IMR-90 (cell line): ENCODE measurements at regions of chr18 and their contacts with region 1.

Region 1: DNA sequence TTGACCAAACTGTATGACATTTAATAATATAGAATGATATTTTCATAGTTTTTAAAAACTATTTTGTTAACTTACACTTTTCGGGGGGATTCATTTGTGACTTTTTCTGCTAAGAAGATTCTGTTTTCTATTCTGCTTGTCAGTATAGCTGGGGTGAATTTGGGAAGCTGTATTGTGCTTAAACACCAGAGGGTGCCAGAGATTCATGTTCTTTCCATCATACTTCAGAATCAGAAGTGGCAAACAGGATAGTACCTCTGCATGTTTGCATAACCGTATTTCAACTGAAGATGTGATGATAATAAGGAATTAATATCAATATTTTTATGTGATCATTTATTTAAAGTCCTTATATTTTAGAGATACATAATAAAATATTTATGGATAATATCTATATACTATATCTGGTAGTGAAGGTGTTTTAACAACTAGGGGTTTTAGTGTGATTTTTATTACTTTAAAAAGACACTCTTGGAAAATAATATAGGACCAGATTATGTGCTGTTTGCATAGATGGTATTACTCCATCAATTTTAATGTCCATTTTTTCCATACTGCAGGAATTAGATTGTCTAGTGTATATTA is 81.0 kb downstream of the TAF4B start:
- DNase-seq: peak; percentile 63
- ATAC-seq: peak; percentile 90
- H3K4me3 ChIP-seq: no peak overlapping the region
- H3K27ac ChIP-seq: no peak overlapping the region
- H3K4me1 ChIP-seq: no peaks in the 10 kb centered on the region
- H3K27me3 ChIP-seq: no peaks in the 10 kb centered on the region
- CTCF ChIP-seq: peak; percentile 79
- POLR2A ChIP-seq: no peak
- RAD21 ChIP-seq: peak; percentile 79

Region 2: GRCh38 chr18:26648509-26649192 is 341.4 kb after region 1 on chr18:
- CTCF ChIA-PET with region 1: no interaction called
- POLR2A ChIA-PET with region 1: no interaction called
- dilution Hi-C with region 1: no loop called
- in situ Hi-C with region 1: no loop called
- intact Hi-C with region 1: loop called (anchors 1 kb)
- DNase-seq: no peak
- ATAC-seq: no peak
- H3K4me3 ChIP-seq: no peak overlapping the region
- H3K27ac ChIP-seq: no peak overlapping the region
- H3K4me1 ChIP-seq: no peaks in the 10 kb centered on the region
- H3K27me3 ChIP-seq: peaks cover 9% of the 10 kb centered on the region
- CTCF ChIP-seq: no peak
- POLR2A ChIP-seq: no peak
- RAD21 ChIP-seq: no peak

Region 3: DNA sequence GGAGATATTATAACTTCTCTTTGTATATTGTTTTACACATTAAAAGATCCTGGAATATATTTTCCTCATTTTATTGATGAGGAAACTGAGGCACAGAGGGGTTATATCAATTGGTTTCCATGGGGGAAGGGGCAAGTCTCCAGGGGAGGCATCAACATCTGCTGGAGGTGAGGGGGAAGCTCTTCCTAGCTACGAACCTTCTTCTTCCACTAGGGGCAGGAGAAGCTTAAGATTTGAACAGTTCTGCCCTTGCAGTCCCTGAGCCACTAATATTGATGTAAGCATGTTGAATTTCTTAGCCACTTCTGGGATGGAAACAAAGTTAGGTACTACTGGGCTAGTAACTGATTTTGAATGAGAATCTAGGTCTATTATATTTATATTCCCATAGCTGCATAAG is 698.3 kb after region 1 on chr18:
- CTCF ChIA-PET with region 1: no interaction called
- POLR2A ChIA-PET with region 1: no interaction called
- dilution Hi-C with region 1: no loop called
- in situ Hi-C with region 1: no loop called
- intact Hi-C with region 1: loop called (anchors 5 kb)
- DNase-seq: no peak
- ATAC-seq: no peak
- H3K4me3 ChIP-seq: no peak overlapping the region
- H3K27ac ChIP-seq: no peak overlapping the region
- H3K4me1 ChIP-seq: no peaks in the 10 kb centered on the region
- H3K27me3 ChIP-seq: no peaks in the 10 kb centered on the region
- CTCF ChIP-seq: no peak
- POLR2A ChIP-seq: no peak
- RAD21 ChIP-seq: no peak

Region 4: DNA sequence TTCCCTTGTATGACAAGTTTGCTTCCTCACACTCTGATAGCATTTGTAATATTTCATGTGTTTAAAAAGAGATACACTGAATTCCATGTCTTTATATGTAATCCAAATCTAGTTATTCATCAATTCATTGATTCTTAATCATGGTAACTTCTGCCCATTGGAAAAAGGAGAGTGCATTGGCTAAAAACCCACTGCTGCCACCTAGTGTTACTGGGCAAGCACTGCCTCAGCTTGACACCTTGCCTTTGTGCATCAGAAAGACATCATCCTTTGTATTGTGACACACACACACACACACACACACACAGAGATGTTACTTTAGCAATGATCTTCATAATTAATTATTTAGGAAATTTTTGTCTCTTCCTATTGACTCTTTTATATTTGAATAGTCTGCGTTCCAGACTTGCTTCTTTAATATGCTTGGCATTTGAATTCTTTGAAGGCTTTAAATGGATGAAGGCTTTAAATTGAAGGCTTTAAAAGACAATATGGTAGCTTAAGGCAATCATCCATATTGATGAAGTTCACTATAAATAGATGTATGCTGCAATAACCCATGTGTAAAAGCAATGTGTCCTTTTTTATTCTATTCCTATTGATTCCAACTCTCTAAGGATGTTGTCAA is 1292.0 kb after region 1 on chr18:
- CTCF ChIA-PET with region 1: interaction called, 3 read pairs
- POLR2A ChIA-PET with region 1: no interaction called
- dilution Hi-C with region 1: no loop called
- in situ Hi-C with region 1: loop called (anchors 10 kb)
- intact Hi-C with region 1: no loop called
- DNase-seq: peak; percentile 28
- ATAC-seq: peak; percentile 65
- H3K4me3 ChIP-seq: no peak overlapping the region
- H3K27ac ChIP-seq: no peak overlapping the region
- H3K4me1 ChIP-seq: no peaks in the 10 kb centered on the region
- H3K27me3 ChIP-seq: no peaks in the 10 kb centered on the region
- CTCF ChIP-seq: peak; percentile 74
- POLR2A ChIP-seq: no peak
- RAD21 ChIP-seq: peak; percentile 56